ENCODE measurements at regions of chr4 and their contacts with region 1.

Region 1: DNA sequence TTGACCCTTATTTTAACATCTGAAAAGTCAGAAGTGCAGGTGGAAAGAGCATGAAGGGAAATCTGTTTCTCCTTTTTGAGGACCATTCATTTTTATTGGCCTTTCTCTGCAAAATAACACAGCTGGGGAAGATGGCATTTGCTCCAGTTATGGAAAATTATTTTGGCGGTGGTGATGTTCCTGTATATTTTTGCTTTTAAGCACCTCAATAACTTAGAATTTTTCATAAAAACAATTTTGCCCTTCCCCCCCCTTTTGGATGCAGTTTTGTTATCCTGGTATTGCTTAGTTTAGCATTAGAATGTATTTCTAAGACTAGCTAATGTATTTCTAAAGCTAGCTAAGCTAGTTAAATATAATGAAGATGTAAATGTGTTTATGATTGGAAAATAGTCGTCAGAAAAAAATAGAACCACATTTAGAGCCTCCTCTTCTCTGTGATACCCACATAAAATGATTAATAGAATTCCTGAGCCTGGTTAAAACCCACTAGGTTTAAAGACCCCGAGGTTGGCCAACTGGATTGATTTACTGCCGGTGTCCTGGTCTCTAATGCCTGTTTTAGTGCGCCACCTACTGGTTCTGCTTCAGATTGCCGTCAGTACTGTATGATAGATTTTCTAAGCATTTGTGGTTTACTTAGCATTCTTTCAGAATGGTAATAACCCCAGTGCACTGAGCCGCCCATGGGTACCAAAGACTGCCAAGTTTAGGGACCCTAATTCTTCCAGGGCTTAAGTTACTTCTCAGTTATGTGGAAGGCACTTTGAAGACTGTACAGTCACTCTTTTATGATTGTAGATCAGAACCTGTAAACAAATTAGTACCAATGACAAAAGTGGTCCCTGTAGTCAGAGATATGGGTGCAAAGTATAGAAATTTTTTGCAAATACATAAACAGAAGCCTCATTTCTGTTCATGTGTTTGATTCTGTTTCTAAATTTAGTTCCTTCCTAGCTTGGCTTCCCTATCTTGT is 11.4 kb downstream of the KLF3 start:
- DNase-seq: peak; percentile 52
- ATAC-seq: peak; percentile 52

Region 2: DNA sequence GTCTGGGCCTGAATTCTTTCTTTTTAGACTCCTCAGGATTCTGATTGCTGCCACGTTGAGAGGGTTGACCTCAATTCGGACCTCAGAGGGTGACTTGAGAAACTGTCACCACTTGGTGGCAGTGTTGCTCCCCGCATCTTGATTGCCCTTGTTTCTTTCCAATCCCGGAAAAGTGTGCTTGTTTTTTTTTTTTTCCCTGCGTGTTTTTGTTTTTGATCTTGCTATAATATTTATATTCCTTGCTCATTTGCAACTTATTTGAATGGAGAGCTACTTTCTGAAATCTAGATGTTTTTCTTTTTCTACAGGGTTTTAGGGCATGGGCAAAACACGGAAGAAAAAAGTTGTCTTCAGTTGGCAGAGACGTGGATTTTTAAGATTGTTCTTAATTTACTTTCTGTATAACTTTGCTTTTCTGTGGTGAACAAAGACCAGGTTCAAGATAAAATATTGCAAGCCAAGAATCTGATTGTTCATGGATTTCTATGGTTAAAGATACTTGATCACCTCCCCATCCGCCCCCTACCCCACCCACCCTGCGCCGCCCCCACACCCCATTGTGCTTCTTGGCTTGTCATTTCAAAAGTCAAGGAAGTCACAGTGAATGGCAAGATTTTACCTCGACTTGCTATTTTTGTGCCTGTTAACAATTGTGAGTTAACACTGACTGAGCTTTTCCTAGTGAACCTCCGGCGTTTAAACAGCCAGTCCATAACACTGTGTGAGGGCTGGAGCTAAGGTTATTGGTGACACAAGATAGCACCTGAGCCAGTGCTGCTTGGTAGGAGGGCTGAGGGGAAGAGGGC is 613.1 kb before region 1 on chr4:
- intact Hi-C with region 1: loop called (anchors 10 kb)
- DNase-seq: peak; percentile 84
- ATAC-seq: peak; percentile 80

Region 3: DNA sequence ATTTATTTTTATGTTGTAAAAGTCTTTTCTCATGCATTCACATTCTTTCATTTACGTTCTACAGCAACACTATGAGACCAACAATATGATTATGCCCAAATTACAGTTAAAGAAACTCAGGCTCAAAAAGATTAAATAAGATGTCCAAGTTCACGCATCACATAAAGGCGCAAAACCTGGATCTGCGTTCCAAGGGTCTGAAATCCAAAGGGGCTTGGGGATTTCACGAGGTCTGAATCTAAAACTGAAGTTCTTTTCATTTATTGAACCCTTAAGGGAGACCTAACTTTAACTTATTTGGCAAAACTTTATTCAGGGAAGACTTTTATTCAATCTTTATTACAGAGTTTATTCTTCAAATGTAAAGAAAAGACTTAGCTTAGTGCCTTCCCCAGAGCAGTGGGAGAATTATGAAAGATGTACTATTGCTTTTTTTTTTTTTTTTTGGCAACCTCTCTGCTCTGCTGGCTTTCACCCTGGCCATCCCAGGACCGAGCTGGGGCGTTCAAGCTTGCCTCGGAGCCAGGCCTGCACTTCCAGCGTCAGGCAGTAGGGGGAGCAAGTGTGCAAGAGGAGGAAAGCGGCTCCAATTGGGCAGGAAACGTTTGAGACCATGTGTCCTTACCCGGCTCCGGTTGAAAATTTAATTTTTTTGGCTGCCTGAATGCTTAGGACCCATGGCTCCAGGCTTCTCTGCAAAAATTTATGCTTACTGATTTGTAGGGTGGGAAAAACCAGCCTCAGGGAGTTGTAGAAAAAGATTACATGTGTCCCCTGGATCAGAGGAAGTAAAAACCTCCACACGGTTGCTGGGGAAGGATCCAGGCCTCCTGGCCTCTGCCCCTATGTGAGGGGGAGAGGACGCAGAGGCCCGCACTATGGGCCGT is 355.7 kb before region 1 on chr4:
- intact Hi-C with region 1: loop called (anchors 5 kb)
- DNase-seq: peak; percentile 96
- ATAC-seq: peak; percentile 86

Region 4: DNA sequence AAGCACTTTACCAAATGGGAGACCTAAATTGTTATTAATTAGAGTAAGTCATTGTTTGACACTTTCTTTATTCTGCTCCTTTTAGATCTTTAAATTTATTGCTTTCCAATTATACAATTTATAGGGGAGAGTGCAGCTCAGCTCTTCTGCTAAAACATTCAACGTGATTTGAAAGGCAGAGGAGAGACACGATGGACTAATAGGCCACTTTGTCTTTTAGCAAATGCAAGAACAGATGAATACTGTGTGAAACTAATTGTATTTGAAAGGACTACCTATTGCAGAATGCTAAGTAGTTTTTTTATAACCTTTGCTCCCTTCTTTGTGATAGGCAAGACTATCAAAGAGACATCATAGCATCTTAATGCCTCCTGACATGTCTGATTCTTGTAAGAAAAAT is 331.8 kb before region 1 on chr4:
- intact Hi-C with region 1: no loop called
- DNase-seq: no peak
- ATAC-seq: no peak

Region 5: GRCh38 chr4:38743866-38744265 is 68.4 kb after region 1 on chr4:
- intact Hi-C with region 1: no loop called
- DNase-seq: no peak
- ATAC-seq: peak; percentile 54